Activated CD4-positive, alpha-beta T cell treated with anti-CD3 and anti-CD28 coated beads for 36 hours (primary cell): ENCODE measurements at regions of chr1 and their contacts with region 1.

Region 1: DNA sequence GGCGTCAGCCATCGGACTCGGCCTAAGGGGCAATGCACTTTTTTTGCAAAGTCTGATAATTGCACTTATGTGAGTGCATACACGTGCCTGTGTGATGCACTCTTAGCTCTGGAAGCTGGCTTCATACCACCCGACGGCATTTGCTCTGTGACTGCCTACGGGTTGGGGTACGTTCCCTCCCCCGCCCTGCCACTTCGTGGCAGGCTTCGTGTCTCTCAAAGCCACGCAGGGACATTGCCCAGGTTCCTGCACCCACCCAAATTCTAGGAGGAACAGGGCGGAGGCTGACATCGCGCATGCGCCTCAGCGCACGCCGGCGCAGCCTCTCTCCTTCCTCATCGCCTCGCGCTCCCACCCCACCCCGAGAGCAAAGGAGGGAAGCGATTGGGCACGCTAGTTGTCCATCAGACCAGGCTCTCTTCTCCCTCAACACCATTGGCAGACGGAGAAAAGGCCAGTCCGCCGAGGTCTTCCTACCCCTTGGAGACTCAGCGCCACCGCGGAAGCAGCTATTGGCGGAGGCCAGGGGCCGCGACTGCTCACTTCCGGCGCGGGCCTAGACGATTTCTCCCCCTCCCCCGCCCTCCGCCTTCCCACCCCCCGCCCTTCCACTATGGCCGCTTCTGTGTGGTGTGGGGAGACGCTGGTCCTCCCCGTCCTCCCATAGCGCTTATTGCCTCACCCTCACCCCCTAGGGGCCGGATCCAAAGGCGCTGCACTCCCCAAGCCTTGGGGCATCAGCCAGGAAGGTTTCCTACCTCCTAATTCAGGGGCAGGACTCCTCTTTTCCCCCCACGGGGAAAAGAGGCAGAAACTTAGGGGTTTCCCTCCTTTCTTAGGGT is at the start of gene INTS3:
- DNase-seq: peak; percentile 99
- ATAC-seq: peak; percentile 99
- H3K4me3 Mint-ChIP-seq: peak within 1 kb of the TSS; percentile 93
- H3K27ac Mint-ChIP-seq: peak within 1 kb of the TSS; percentile 95
- H3K4me1 Mint-ChIP-seq: peaks cover 44% of the 10 kb centered on the region
- H3K27me3 Mint-ChIP-seq: no peaks in the 10 kb centered on the region
- total RNA-seq, gene INTS3: 52.0 to 58.0 TPM

Region 2: DNA sequence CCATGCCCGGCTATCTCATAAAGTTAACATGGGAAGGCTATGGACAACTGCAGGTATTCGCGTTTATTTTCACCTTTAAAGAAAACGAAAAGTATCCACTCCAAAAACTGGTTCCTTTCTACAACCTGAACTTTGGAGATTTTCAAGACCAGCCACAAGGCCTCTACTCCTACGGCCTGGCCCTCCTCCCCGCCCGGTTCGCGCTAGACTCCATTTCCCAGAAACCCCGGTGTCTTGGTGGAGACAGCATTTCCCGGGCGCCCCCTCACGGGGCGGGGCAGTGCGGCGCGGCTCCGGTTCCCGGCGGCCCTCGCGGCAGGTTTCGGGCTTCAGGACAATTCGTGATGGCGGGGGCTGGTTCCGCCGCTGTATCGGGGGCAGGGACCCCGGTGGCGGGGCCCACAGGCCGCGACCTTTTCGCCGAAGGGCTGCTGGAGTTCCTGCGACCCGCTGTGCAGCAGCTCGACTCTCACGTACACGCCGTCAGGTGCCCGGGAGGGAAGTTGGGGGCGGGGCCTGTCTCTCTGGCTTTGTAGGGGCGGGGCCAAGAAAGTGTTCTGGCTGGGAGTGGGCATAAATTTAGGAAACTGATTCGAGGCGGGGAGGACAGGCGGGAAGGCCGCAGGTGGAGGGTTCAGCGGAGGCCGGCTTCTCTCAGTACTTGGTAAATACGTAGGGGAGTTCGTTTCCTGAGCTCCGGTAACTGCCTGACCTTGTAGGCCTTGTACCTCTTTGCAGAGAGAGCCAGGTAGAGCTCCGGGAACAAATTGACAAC is 69.1 kb before region 1 on chr1 and contains the start of gene SNAPIN:
- CTCF ChIA-PET with region 1: no interaction called
- POLR2A ChIA-PET with region 1: no interaction called
- intact Hi-C with region 1: loop called in 1 of 2 experiments (anchors 1 kb)
- DNase-seq: peak; percentile 96
- ATAC-seq: peak; percentile 96
- H3K4me3 Mint-ChIP-seq: peak within 1 kb of the TSS; percentile 95
- H3K27ac Mint-ChIP-seq: peak within 1 kb of the TSS; percentile 90
- H3K4me1 Mint-ChIP-seq: peaks cover 13% of the 10 kb centered on the region
- H3K27me3 Mint-ChIP-seq: no peaks in the 10 kb centered on the region
- total RNA-seq, gene SNAPIN: 34.2 to 38.4 TPM

Region 3: DNA sequence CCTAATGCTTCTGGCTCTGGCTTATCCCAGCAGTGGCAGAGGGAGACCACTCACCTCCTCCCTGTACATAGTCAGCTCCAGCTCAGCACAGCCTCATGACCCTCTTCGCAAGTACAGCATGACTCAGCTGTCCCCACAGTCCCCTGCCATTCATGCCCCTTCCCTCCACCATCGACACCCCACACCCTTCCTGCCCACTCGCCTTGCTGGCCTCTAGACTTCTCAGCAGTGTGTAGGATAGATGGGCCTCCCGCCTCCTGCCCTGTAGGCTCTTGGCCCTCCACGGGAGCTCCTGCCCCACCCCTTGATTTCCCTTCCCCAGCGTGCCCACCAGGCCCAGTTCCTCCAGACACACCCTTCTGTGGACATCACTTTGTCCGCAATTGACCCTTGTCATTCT is 39.4 kb before region 1 on chr1:
- CTCF ChIA-PET with region 1: no interaction called
- POLR2A ChIA-PET with region 1: no interaction called
- intact Hi-C with region 1: no loop called
- DNase-seq: no peak
- ATAC-seq: no peak
- H3K4me3 Mint-ChIP-seq: no peak overlapping the region
- H3K27ac Mint-ChIP-seq: no peak overlapping the region
- H3K4me1 Mint-ChIP-seq: no peaks in the 10 kb centered on the region
- H3K27me3 Mint-ChIP-seq: peaks cover 5% of the 10 kb centered on the region

Region 4: GRCh38 chr1:153958111-153958960 is 230.7 kb after region 1 on chr1 and contains the start of gene CRTC2:
- CTCF ChIA-PET with region 1: no interaction called
- POLR2A ChIA-PET with region 1: no interaction called
- intact Hi-C with region 1: loop called in 1 of 2 experiments (anchors 5 kb)
- DNase-seq: peak; percentile 99
- ATAC-seq: peak; percentile 90
- H3K4me3 Mint-ChIP-seq: peak within 1 kb of the TSS; percentile 99
- H3K27ac Mint-ChIP-seq: peak within 1 kb of the TSS; percentile 95
- H3K4me1 Mint-ChIP-seq: peaks cover 55% of the 10 kb centered on the region
- H3K27me3 Mint-ChIP-seq: no peaks in the 10 kb centered on the region
- total RNA-seq, gene CRTC2: 60.6 to 80.4 TPM